Ovary (tissue), 10 donors: ENCODE measurements at regions of chrX and their contacts with region 1.

Region 1: GRCh38 chrX:2397229-2398063 is 103.3 kb downstream of the DHRSX start:
- DNase-seq: no peak
- H3K4me3 ChIP-seq: no peak overlapping the region
- H3K27ac ChIP-seq: no peak overlapping the region
- H3K4me1 ChIP-seq: peaks cover 2% of the 10 kb centered on the region
- H3K27me3 ChIP-seq: no peaks in the 10 kb centered on the region
- CTCF ChIP-seq: no peak
- EP300 ChIP-seq: no peak
- POLR2A ChIP-seq: no peak

Region 2: GRCh38 chrX:2463973-2464676 is 66.7 kb after region 1 on chrX:
- intact Hi-C with region 1: loop called in 1 of 4 experiments (anchors 2 kb)
- DNase-seq: no peak
- H3K4me3 ChIP-seq: no peak overlapping the region
- H3K27ac ChIP-seq: no peak overlapping the region
- H3K4me1 ChIP-seq: no peaks in the 10 kb centered on the region
- H3K27me3 ChIP-seq: no peaks in the 10 kb centered on the region
- CTCF ChIP-seq: no peak
- EP300 ChIP-seq: no peak
- POLR2A ChIP-seq: no peak